Posterior vena cava (tissue), 2 donors: ENCODE measurements at regions of chr15 and their contacts with region 1.

Region 1: GRCh38 chr15:90581771-90582352 is 52.1 kb downstream of the CRTC3 start:
- DNase-seq: no peak

Region 2: GRCh38 chr15:90425726-90426346 is 156.0 kb before region 1 on chr15:
- intact Hi-C with region 1: no loop called
- DNase-seq: no peak

Region 3: DNA sequence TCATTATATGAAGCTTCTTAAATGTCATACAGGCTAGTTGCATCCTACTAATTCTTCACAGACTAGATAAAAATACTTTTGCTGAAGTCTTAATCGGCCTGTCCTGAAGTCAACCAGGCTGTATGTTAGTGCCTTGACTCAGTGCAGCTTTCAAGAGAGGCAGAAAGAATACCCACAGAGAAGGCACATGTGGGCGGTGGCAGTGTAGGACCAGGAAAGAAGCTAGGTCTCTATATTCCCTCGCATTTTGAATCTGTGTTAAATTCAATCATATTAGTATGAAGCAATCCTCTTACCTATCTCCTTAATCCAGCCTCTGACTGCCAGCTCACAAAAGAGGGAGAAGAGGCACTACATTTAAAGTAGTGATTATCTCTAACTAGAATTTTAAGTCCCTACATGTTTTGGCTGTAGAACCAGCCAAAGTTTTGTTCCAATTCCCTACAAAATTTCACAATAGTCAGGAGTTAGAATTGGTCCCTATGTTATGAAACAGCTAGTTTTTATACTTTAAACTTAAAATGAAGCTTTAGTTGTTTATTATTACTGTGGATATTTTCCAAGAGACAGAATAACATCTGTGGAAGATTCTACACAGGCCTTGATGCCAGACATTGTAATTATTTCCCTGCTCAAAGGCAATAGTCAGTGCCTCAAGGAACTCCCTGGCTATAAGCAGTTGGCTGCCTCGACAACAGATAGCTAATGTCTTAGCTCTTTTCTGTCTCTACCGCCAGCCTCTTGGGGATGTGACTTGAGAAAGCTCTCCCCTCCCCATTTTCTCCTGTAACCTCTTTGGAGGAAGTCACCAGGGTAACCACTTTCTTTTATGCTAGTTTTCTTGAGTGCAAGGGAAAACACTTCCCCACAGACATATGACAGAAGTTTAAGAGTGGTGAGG is 20.3 kb before region 1 on chr15:
- intact Hi-C with region 1: loop called in 1 of 2 experiments (anchors 1 kb)
- DNase-seq: no peak